ENCODE measurements at regions of chr3 and their contacts with region 1.

Region 1: DNA sequence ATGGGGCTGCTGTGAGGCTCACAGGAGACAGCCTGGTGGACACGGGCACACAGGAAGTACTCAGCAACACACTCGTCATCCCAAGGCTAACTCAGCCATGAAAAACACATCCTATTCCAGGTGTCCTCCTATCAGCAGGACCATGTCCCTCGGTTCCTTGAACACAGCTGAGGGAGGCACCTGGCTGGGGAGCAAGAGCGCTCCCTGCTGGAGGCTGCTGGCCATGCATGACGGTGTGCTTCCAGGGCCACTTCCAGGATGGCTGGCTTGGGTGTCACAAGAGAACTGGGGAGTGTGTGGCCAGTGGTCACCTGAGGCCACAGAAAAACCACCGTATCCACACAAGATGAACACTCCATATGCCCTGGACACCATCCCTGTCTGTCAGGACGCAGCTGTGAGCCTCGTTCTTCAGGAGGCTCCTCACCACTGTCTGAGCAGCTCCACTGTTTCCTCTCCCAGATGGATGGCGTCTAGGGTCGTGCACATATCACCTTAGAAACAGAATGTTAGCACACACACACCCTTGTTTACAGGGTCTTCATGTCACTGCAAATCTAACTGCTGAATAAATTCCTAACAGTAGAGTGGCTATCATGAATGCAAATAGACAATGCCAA is 31.0 kb downstream of the POC1A start:
- DNase-seq: no peak
- H3K4me3 ChIP-seq: no peak overlapping the region
- CTCF ChIP-seq: peak; percentile 98

Region 2: DNA sequence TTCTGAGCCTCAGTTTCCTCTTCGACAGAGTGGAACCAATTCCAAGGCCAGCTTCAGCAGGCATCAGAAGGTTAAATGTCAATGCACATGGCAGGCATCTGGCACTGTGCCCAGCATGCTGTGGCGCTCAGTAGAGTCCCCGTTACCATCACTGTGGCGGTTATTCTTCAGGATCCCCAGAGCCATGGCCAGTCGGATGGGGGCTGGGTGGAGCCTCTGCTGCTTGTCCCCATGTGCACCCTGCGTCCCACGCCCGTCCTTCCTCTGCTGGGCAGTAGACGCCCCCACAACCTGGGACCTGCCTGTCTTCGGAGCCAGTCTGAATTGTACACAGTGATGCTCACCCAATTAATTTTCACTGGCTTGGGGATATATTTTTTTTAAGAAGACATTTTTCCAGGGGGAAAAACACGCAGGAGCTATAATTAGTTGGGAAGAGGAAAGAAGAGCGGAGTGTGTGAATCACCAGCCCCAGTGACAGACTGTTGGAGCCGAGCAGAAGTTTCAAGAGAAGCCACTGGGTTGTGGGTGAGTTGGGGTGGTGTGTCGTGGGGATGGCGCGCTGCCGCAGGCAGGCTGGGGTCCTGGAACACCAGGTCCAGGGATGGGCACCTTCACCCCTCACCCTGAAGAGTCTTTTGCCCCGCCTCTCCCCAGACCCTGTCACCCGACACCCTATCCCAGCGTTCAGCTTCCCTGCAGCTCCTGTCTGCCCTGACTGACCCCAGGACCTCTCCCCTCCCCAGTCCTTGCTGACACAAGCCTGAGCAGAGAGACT is 100.7 kb before region 1 on chr3:
- CTCF ChIA-PET with region 1: interaction called, 779 read pairs
- POLR2A ChIA-PET with region 1: no interaction called
- DNase-seq: no peak
- H3K4me3 ChIP-seq: no peak overlapping the region
- CTCF ChIP-seq: no peak

Region 3: DNA sequence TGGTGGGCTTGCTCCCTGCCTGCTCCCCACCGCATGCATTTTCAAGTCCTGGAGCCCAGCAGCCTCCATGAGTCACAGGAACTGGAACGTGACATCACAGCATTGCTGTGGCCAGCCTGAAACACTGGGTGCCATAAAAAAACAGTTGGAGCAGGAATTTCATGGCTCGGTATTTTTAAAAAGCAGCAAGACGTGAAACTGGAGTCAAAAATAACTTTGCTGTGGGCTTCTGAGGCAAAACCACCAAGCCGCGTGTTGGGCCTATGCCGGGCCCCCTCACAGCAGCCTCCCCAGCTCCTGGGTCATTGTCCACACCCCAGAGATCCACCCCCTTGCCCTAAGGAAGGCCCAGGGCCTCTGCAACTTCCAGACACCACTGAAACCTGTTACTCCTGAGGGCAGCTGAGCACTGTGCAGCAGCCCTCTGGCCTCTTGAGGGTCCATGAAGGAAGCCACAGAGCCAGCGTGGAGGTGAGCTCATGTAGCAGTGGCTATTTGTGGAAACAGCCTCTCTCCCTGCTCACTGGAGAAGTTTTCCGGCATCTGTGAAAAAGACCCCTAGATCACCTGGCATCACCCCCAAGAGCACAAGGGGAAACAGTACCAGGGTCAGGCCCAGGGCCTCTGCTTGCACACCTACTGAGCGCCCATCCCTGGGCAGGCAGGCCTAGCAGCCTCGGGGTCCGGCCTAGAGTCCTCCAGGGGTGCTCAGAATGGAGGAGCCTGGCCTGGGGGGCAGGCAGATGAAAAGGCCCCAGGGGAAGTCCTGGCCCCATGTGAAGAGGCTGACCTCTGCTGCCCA is 32.9 kb before region 1 on chr3:
- CTCF ChIA-PET with region 1: interaction called, 22 read pairs
- POLR2A ChIA-PET with region 1: no interaction called
- DNase-seq: peak; percentile 83
- H3K4me3 ChIP-seq: no peak overlapping the region
- CTCF ChIP-seq: no peak

Region 4: GRCh38 chr3:52108302-52109232 is 14.6 kb before region 1 on chr3:
- CTCF ChIA-PET with region 1: interaction called, 120 read pairs
- POLR2A ChIA-PET with region 1: no interaction called
- DNase-seq: no peak
- H3K4me3 ChIP-seq: 0 out of 2 replicates have a peak overlapping the region, but pooled peaks have one; percentile 0
- CTCF ChIP-seq: peak; percentile 73

Region 5: GRCh38 chr3:52144034-52144795 is 21.0 kb after region 1 on chr3:
- CTCF ChIA-PET with region 1: interaction called, 93 read pairs
- POLR2A ChIA-PET with region 1: no interaction called
- DNase-seq: peak; percentile 41
- H3K4me3 ChIP-seq: no peak overlapping the region
- CTCF ChIP-seq: peak; percentile 95

Region 6: GRCh38 chr3:52339612-52340011 is 216.4 kb after region 1 on chr3:
- CTCF ChIA-PET with region 1: no interaction called
- POLR2A ChIA-PET with region 1: no interaction called
- DNase-seq: peak; percentile 57
- H3K4me3 ChIP-seq: no peak overlapping the region
- CTCF ChIP-seq: peak; percentile 51